ENCODE measurements at regions of chr3 and their contacts with region 1.

Region 1: GRCh38 chr3:72996473-72997333 is at the start of gene PPP4R2:
- DNase-seq: peak; percentile 90 to 96 (median 94)
- ATAC-seq: peak; percentile 94
- H3K4me3 ChIP-seq: peak within 1 kb of the TSS; percentile 76
- H3K4me3 Mint-ChIP-seq: peak within 1 kb of the TSS; percentile 84 to 95 (median 92)
- H3K27ac ChIP-seq: peak within 1 kb of the TSS; percentile 97
- H3K27ac Mint-ChIP-seq: peak within 1 kb of the TSS; percentile 69 to 97 (median 88)
- H3K4me1 ChIP-seq: peaks cover 26 to 36% of the 10 kb centered on the region in 2 donors
- H3K4me1 Mint-ChIP-seq: peaks cover 30 to 51% (median 44%) of the 10 kb centered on the region in 7 donors
- H3K27me3 ChIP-seq: no peaks in the 10 kb centered on the region
- H3K27me3 Mint-ChIP-seq: no peaks in the 10 kb centered on the region
- total RNA-seq, gene PPP4R2: 56.3 to 87.0 (median 63.8) TPM

Region 2: GRCh38 chr3:72847751-72848702 is 148.7 kb before region 1 on chr3 and contains the start of gene SHQ1:
- CTCF ChIA-PET with region 1: no interaction called
- POLR2A ChIA-PET with region 1: no interaction called
- intact Hi-C with region 1: loop called (anchors 1 kb)
- DNase-seq: peak; percentile 87 to 94 (median 92)
- ATAC-seq: peak; percentile 96
- H3K4me3 ChIP-seq: peak within 1 kb of the TSS; percentile 92
- H3K4me3 Mint-ChIP-seq: peak within 1 kb of the TSS; percentile 93 to 100 (median 98)
- H3K27ac ChIP-seq: peak within 1 kb of the TSS; percentile 71
- H3K27ac Mint-ChIP-seq: peak within 1 kb of the TSS; percentile 80 to 92 (median 89)
- H3K4me1 ChIP-seq: peaks cover 14 to 16% of the 10 kb centered on the region in 2 donors
- H3K4me1 Mint-ChIP-seq: peaks cover 34 to 67% (median 51%) of the 10 kb centered on the region in 7 donors
- H3K27me3 ChIP-seq: no peaks in the 10 kb centered on the region
- H3K27me3 Mint-ChIP-seq: peaks cover 0 to 7% (median 0%) of the 10 kb centered on the region in 5 donors
- total RNA-seq, gene SHQ1: 14.1 to 34.3 (median 24.5) TPM

Region 3: DNA sequence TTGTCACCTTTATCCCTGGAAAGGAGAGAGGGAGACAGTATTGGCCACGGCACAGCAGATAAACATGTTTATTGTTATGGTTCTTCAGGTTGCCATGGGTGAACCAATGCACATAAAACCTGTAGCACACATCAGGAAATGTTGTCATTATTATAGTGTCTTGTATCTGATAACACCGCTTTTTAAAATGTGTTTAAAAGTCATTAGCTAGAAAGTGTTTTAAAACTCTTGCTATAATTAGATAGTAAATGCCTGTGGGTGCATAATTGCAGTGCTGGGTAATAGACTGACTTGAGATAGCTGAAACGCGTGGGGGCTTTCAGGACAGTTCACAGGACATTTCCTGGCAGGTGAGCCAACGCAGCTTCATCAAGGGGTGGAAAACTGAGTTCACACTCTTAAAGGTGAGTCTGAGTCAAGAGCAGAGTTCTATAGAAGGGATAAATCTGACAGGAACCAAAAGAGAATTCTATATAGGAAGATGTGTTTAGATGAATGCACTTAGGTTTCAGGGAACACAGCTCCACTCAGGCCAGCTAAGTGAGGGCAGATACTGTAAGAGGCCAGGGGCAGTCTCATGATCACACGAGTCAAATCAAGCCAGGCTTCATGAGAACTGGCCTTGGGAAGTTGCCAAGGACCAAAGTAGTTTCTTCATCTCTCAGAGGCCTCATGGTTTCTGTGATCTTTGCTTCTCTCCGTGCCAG is 35.7 kb before region 1 on chr3:
- CTCF ChIA-PET with region 1: no interaction called
- POLR2A ChIA-PET with region 1: no interaction called
- intact Hi-C with region 1: loop called (anchors 1 kb)
- DNase-seq: no peak
- ATAC-seq: no peak
- H3K4me3 ChIP-seq: no peak overlapping the region
- H3K4me3 Mint-ChIP-seq: no peak overlapping the region
- H3K27ac ChIP-seq: no peak overlapping the region
- H3K27ac Mint-ChIP-seq: peak overlapping the region in 1 of 9 donors; percentile 44
- H3K4me1 ChIP-seq: peaks cover 10 to 13% of the 10 kb centered on the region in 2 donors
- H3K4me1 Mint-ChIP-seq: peaks cover 5 to 34% (median 30%) of the 10 kb centered on the region in 7 donors
- H3K27me3 ChIP-seq: no peaks in the 10 kb centered on the region
- H3K27me3 Mint-ChIP-seq: peaks cover 0 to 5% (median 0%) of the 10 kb centered on the region in 5 donors

Region 4: GRCh38 chr3:73030073-73030597 is 33.4 kb after region 1 on chr3:
- CTCF ChIA-PET with region 1: no interaction called
- POLR2A ChIA-PET with region 1: no interaction called
- intact Hi-C with region 1: loop called in 1 of 2 experiments (anchors 5 kb)
- DNase-seq: no peak
- ATAC-seq: no peak
- H3K4me3 ChIP-seq: no peak overlapping the region
- H3K4me3 Mint-ChIP-seq: peak overlapping the region in 5 of 10 donors; percentile 5 to 39 (median 20)
- H3K27ac ChIP-seq: no peak overlapping the region
- H3K27ac Mint-ChIP-seq: peak overlapping the region in 6 of 9 donors; percentile 3 to 60 (median 28)
- H3K4me1 ChIP-seq: peaks cover 7 to 33% of the 10 kb centered on the region in 2 donors
- H3K4me1 Mint-ChIP-seq: peaks cover 57 to 94% (median 88%) of the 10 kb centered on the region in 7 donors
- H3K27me3 ChIP-seq: no peaks in the 10 kb centered on the region
- H3K27me3 Mint-ChIP-seq: no peaks in the 10 kb centered on the region

Region 5: GRCh38 chr3:73056014-73056844 is 59.5 kb after region 1 on chr3:
- CTCF ChIA-PET with region 1: interaction called, 6 read pairs
- POLR2A ChIA-PET with region 1: interaction called, 4 read pairs
- intact Hi-C with region 1: loop called (anchors 1 to 2 kb)
- DNase-seq: peak in 6 of 9 donors; percentile 16 to 52 (median 26)
- ATAC-seq: peak; percentile 54
- H3K4me3 ChIP-seq: no peak overlapping the region
- H3K4me3 Mint-ChIP-seq: no peak overlapping the region
- H3K27ac ChIP-seq: no peak overlapping the region
- H3K27ac Mint-ChIP-seq: peak overlapping the region in 6 of 9 donors; percentile 14 to 46 (median 30)
- H3K4me1 ChIP-seq: no peaks in the 10 kb centered on the region
- H3K4me1 Mint-ChIP-seq: peaks cover 8 to 30% (median 26%) of the 10 kb centered on the region in 7 donors
- H3K27me3 ChIP-seq: no peaks in the 10 kb centered on the region
- H3K27me3 Mint-ChIP-seq: no peaks in the 10 kb centered on the region

Region 6: GRCh38 chr3:73547427-73548248 is 550.9 kb after region 1 on chr3:
- CTCF ChIA-PET with region 1: no interaction called
- POLR2A ChIA-PET with region 1: no interaction called
- intact Hi-C with region 1: no loop called
- DNase-seq: no peak
- ATAC-seq: no peak
- H3K4me3 ChIP-seq: no peak overlapping the region
- H3K4me3 Mint-ChIP-seq: no peak overlapping the region
- H3K27ac ChIP-seq: no peak overlapping the region
- H3K27ac Mint-ChIP-seq: no peak overlapping the region
- H3K4me1 ChIP-seq: no peaks in the 10 kb centered on the region
- H3K4me1 Mint-ChIP-seq: peaks cover 0 to 3% (median 0%) of the 10 kb centered on the region in 7 donors
- H3K27me3 ChIP-seq: no peaks in the 10 kb centered on the region
- H3K27me3 Mint-ChIP-seq: peaks cover 0 to 11% (median 8%) of the 10 kb centered on the region in 5 donors

Measured in naive thymus-derived CD4-positive, alpha-beta T cell (primary cell).